WTC11 (cell line): ENCODE measurements at regions of chr9 and their contacts with region 1.

Region 1: DNA sequence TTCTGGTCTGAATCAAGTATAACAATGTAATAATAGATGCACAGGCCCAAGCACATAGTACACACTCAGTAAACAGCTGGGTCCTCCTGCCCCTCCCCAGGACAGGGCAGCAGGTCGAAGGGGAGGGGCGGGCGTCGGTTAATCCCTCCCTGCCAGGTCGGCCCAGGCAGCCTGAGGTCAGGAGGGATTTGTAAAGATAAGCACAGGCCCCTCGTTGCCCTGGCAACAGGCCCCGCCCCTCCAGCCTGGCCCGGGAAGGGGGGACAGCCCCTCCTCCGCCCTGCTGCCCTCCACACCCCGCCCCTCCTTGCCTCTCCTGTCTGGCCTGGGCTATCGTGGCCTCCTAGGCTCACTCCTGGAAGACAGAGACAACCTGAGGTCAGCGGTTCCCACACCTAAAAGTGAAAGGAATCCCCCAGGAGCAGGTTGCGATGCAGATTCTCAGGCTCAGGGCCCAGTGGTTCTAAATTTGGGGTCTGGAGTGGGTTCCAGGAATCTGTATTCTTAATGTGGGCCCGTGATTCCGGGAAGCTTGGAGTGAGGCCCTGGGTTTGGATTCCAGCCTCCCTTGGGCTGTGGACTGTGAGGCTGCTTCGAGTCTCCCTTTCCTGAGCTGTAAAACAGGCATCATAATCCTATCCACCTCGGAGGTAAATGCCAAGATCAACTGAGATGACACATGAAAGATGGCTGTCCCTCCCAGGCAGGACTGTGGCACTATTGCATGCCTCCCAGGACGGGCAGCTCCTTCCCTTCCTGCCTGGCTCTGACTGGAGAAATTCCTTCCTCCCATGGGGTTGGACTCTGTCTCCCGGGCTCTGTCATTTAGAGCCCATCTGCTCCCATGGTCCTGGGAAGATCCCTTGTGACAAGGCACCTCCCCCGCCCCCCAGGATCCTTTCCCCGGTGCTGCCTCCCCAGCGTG is 4.4 kb downstream of the CRB2 start:
- DNase-seq: peak; percentile 98
- ATAC-seq: peak; percentile 78
- H3K4me3 Mint-ChIP-seq: 0 out of 2 replicates have a peak overlapping the region, but pooled peaks have one; percentile 24
- H3K27ac Mint-ChIP-seq: peak overlapping the region; percentile 3; the same call in 1 of the 2 replicates
- H3K4me1 Mint-ChIP-seq: peaks cover 58% of the 10 kb centered on the region
- H3K27me3 Mint-ChIP-seq: peaks cover 10% of the 10 kb centered on the region
- CTCF ChIP-seq: no peak

Region 2: DNA sequence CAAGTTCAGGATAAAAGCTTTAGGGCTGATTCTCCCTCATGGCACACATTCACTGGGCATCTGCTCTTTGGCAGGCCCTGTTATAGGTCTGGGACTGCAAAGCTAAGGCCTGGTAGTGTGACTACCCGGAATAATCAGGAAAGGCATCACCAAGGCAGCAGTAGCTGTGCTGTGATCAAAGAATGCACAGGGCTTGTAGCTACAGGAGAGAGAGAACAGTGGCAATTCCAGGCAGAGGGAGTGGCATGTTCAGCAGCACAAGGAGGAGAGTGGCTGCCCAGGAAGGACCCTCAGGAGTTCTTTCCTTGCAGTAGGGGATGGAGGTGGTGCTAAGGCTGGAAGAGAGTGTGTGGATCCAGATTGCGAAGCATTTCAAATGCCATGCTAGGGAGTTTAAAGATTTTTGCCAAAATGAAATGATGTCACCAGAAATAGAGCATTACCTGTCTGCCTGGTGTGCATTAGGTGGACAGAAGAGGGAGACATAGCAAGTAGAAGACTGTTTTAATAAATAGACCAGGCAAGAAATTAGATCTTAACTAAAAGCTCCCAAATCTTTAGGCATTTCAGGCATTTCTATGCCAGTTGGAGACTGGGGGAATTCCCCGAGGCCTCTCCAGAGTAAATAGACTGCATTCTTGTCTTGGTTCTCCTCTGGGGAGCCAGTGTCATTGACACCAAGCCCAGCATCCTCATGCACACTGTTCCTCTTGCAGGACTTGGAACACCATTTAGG is 257.9 kb before region 1 on chr9:
- CTCF ChIA-PET with region 1: interaction called, 13 read pairs
- POLR2A ChIA-PET with region 1: no interaction called
- DNase-seq: no peak
- ATAC-seq: peak; percentile 21
- H3K4me3 Mint-ChIP-seq: no peak overlapping the region
- H3K27ac Mint-ChIP-seq: peak overlapping the region; percentile 55
- H3K4me1 Mint-ChIP-seq: peaks cover 29% of the 10 kb centered on the region
- H3K27me3 Mint-ChIP-seq: no peaks in the 10 kb centered on the region
- CTCF ChIP-seq: no peak

Region 3: DNA sequence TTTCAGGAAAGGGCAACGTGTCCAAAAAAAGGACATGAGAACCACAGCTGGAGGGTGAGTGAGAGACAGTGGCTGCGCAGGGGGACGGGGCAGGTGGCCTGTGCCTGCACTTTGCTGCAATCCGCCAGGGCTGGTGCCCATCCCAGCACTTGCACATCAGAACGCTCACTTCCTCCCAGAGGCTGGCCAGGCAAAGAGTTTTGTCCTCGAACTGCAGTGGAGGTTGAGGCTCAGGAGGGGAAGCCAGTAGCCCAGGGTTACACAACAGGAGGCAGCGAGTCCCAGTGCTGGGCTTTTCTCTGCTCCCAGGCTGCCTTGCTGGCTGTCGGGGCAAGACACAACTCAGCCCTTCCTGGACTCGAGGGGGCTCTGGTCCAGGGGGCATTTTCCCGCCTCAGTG is 28.6 kb after region 1 on chr9:
- CTCF ChIA-PET with region 1: interaction called, 80 read pairs
- POLR2A ChIA-PET with region 1: no interaction called
- DNase-seq: no peak
- ATAC-seq: no peak
- H3K4me3 Mint-ChIP-seq: no peak overlapping the region
- H3K27ac Mint-ChIP-seq: no peak overlapping the region
- H3K4me1 Mint-ChIP-seq: no peaks in the 10 kb centered on the region
- H3K27me3 Mint-ChIP-seq: no peaks in the 10 kb centered on the region; the same call in 1 of the 2 replicates
- CTCF ChIP-seq: no peak